ENCODE measurements at regions of chr20 and their contacts with region 1.

Region 1: GRCh38 chr20:57329608-57330221 is at the start of gene SPO11:
- DNase-seq: no peak
- H3K4me3 Mint-ChIP-seq: no peak within 1 kb of the TSS
- H3K27ac Mint-ChIP-seq: no peak within 1 kb of the TSS
- H3K4me1 Mint-ChIP-seq: peaks cover 7% of the 10 kb centered on the region
- H3K27me3 Mint-ChIP-seq: peaks cover 18% of the 10 kb centered on the region
- CTCF ChIP-seq: peak; percentile 17
- total RNA-seq, gene SPO11: not detected in 2 replicates

Region 2: DNA sequence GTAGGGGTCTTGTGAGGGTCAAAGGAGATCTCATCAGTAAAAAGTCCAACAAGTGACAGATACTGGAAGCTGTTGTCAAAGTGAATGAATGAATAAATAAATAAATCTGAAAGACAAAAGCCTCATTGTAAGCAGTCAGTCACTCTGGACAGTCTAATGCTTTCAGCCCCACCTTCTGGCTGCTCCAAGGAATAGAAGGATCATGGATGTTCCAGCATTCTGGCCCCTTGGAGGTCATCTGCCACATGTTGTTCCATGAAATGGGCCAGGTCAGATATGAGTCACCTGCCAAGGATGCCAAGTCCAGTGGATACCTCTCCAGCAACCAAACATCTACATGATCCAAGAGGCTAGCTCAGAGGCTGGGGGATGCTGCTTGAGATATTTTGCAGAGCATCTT is 248.9 kb before region 1 on chr20:
- CTCF ChIA-PET with region 1: interaction called, 78 read pairs
- POLR2A ChIA-PET with region 1: interaction called, 3 read pairs
- intact Hi-C with region 1: no loop called
- DNase-seq: peak; percentile 32
- H3K4me3 Mint-ChIP-seq: no peak overlapping the region
- H3K27ac Mint-ChIP-seq: no peak overlapping the region
- H3K4me1 Mint-ChIP-seq: peaks cover 15% of the 10 kb centered on the region
- H3K27me3 Mint-ChIP-seq: peaks cover 18% of the 10 kb centered on the region
- CTCF ChIP-seq: peak; percentile 27

Region 3: GRCh38 chr20:57102566-57103451 is 226.9 kb before region 1 on chr20:
- CTCF ChIA-PET with region 1: interaction called, 426 read pairs
- POLR2A ChIA-PET with region 1: no interaction called
- intact Hi-C with region 1: no loop called
- DNase-seq: no peak
- H3K4me3 Mint-ChIP-seq: no peak overlapping the region
- H3K27ac Mint-ChIP-seq: no peak overlapping the region
- H3K4me1 Mint-ChIP-seq: no peaks in the 10 kb centered on the region
- H3K27me3 Mint-ChIP-seq: peaks cover 67% of the 10 kb centered on the region
- CTCF ChIP-seq: no peak

Region 4: GRCh38 chr20:57162133-57162652 is 167.5 kb before region 1 on chr20:
- CTCF ChIA-PET with region 1: interaction called, 10 read pairs
- POLR2A ChIA-PET with region 1: no interaction called
- intact Hi-C with region 1: no loop called
- DNase-seq: no peak
- H3K4me3 Mint-ChIP-seq: no peak overlapping the region
- H3K27ac Mint-ChIP-seq: no peak overlapping the region
- H3K4me1 Mint-ChIP-seq: no peaks in the 10 kb centered on the region
- H3K27me3 Mint-ChIP-seq: peaks cover 29% of the 10 kb centered on the region
- CTCF ChIP-seq: no peak

Region 5: DNA sequence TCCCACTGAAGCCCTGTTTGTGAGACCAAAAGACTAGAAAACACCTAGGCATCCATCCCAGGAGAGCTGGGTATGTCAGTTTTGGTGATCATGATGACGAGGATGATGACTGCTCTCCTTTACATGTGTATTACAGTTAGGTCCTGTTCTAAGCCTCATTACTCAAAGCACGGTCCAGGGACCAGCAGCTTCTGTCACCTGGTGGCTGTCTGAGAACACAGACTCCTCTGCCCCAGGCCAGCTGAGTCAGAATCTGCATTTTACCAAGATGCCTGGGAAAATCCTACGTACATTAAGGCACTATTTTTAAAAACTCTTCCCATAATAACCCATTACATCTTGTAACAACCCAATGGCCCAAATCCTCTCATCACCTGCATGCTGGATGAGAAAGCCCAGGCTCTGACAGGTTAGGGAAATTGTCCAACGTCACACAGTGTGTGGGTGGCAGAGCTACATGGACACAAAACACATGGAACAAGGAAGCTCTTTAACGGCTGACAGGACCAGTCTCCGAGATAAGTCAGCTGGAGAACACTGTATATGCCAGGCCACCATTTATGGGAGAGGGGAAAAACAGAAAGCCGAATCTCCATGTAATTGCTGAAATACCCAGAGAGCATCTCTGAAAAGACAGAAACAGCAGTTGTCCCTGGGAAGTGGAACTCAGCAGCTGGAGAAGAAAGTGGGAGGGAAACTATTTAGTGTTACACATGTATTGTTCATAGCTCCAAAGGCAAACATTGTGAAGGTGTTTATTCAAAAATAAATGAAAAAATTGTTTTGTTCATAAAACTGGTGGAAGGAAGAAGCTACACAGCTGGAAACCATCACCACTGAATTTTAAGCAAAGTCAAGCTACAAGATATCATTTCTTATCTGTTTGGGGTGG is 128.6 kb before region 1 on chr20:
- CTCF ChIA-PET with region 1: interaction called, 12 read pairs
- POLR2A ChIA-PET with region 1: interaction called, 5 read pairs
- intact Hi-C with region 1: no loop called
- DNase-seq: peak; percentile 30
- H3K4me3 Mint-ChIP-seq: no peak overlapping the region
- H3K27ac Mint-ChIP-seq: no peak overlapping the region
- H3K4me1 Mint-ChIP-seq: peaks cover 16% of the 10 kb centered on the region
- H3K27me3 Mint-ChIP-seq: no peaks in the 10 kb centered on the region
- CTCF ChIP-seq: no peak

Region 6: DNA sequence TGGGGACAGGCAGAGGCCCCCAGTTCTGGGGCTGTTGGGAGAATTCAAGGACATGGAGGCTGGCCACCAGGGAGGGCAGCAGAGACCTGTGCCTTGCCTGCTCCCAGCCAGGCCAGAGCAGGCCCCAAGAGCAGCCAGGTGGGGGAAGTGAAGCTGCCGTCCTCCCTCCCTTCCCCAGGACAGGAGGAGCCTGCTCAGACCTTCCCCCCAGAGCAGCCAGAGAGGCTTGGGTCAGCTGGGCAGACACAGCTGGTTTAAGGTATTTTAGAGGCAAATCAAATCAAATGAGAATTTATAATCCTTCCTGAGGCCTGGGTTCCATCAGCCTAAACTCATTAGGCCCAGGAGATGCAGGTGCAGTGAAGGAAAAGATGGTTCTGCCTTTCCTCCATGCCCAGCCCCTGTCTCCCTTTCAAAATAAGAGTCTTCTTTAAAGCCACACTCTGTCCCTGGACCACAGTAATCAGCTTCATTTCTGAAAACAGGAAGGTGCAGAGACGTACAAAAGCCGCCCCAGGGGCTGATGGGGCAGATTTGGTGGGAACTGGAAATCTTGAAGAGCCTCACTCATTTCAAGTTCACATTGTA is 85.0 kb before region 1 on chr20:
- CTCF ChIA-PET with region 1: interaction called, 10 read pairs
- POLR2A ChIA-PET with region 1: interaction called, 4 read pairs
- intact Hi-C with region 1: no loop called
- DNase-seq: no peak
- H3K4me3 Mint-ChIP-seq: no peak overlapping the region
- H3K27ac Mint-ChIP-seq: no peak overlapping the region
- H3K4me1 Mint-ChIP-seq: peaks cover 9% of the 10 kb centered on the region
- H3K27me3 Mint-ChIP-seq: peaks cover 8% of the 10 kb centered on the region
- CTCF ChIP-seq: no peak

Region 7: DNA sequence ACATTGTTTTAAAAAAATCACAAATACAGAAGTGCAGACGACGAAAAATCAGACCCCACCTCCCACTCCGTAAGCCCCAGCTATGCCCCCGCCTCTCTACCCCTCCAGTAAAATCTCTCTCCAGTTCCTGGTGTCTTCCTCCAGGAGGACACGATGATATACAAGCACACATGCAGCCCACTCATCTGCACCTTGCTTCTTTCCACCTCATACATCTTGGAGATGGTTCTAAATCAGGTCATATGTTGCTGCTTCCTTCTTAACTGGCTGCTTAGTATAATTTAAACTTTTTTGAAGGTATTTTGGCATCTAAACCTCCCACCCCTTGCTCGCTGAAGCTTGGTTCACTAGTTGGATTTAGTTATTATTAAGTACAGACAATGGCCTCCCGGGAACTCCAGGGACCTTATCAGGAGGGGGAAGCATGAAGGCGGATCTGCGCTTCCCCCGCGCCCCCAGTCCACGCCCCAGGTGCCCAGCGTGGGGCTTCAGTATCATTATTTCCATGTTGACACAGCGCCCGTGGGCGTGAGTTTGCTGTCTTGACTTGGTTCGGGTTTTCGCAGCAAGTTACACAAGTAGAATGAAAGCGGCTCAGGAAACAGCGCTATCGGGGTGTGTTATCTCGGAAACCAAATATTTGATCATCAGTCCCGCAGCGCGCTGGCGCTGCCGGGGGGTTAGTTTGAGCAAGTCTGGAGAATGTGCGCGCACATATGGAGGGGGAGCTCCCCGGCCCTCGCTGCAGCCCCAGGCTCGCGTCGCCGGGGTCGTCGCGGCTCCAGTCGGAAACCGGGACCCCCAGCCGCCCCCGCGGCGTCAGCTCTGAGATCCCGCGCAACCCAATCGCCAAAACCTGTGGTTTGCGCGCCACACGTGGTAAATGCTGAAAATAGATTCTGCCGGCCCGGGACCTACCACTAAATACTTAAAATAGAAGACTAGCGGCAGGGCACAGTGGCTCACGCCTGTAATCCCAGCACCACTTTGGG is 65.6 kb before region 1 on chr20:
- CTCF ChIA-PET with region 1: interaction called, 16 read pairs
- POLR2A ChIA-PET with region 1: no interaction called
- intact Hi-C with region 1: no loop called
- DNase-seq: no peak
- H3K4me3 Mint-ChIP-seq: no peak overlapping the region
- H3K27ac Mint-ChIP-seq: no peak overlapping the region
- H3K4me1 Mint-ChIP-seq: no peaks in the 10 kb centered on the region
- H3K27me3 Mint-ChIP-seq: peaks cover 48% of the 10 kb centered on the region
- CTCF ChIP-seq: no peak

Region 8: DNA sequence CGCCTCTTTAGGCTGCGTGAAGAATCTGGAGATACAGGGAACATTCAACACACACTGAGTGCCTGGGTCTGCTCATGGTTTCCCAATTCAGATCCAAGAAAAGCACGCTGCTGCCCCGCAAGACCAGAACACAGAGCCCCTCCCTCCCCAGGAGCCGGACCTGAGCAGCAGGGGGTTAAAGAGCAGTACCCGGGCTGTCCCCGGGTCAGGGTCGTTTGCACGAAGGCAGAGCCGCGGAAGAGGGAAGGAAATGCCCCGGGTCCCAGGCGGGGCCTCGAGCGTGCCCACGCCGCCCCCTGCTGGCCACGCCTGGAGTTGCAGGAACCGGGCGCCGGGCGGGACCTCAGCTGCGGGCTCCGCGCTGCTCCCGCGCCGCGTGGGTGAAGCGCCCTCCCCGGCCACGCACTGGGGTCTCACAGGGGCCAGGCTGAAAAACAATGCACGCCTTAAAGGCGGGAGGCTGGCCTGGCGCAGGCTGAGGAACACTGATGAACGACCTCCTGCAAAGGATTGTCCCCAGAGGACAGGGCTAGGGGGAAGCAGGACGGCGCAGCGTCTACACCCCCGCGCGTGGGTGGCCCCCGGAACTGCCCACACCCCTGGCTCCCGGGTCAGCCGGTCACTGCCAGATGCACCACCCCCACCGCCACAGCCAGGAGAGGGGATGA is 849.9 kb after region 1 on chr20:
- CTCF ChIA-PET with region 1: no interaction called
- POLR2A ChIA-PET with region 1: no interaction called
- intact Hi-C with region 1: no loop called
- DNase-seq: peak; percentile 40
- H3K4me3 Mint-ChIP-seq: no peak overlapping the region
- H3K27ac Mint-ChIP-seq: no peak overlapping the region
- H3K4me1 Mint-ChIP-seq: no peaks in the 10 kb centered on the region
- H3K27me3 Mint-ChIP-seq: peaks cover 32% of the 10 kb centered on the region
- CTCF ChIP-seq: peak; percentile 99

Measured in MCF 10A (cell line).